ENCODE measurements at regions of chr2 and their contacts with region 1.

Region 1: GRCh38 chr2:11749646-11750349 is 3.4 kb downstream of the LPIN1 start:
- DNase-seq: no peak
- H3K27ac ChIP-seq: peak overlapping the region; percentile 56
- CTCF ChIP-seq: no peak

Region 2: DNA sequence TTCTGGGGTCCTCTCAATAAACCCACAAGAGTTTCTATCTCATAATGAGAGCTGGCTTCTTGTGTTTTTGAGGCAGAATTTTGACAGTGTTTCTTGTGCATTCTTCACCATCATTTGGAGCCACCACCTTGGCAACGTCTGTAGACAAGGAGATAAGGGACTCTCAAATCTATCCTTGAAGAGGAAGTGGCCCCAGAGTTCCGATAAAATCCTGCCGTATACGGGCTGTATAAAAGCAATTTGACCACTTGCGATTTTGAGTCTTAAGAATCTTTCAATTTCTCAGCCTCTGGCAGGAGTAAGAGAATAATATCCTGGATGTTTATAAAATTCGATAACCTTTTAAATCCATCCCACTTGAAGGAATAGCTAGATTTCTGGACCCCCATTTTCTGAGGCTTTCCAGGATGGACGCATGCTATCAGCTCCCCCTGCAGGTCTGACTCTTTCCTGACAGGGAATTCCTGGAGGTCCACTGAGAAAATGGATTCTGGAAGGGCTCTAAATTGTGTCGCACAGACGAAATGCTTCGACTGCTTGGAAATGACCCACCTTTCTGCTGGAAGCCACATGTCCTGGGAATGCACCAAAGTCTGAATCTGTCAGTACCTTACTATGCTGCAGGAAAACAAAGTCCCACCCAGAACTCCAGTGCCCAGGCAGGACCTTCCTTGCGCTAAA is 337.9 kb before region 1 on chr2:
- CTCF ChIA-PET with region 1: no interaction called
- POLR2A ChIA-PET with region 1: no interaction called
- DNase-seq: peak; percentile 43
- H3K27ac ChIP-seq: no peak overlapping the region
- CTCF ChIP-seq: peak; percentile 76

Region 3: GRCh38 chr2:11716689-11717321 is 33.0 kb before region 1 on chr2:
- CTCF ChIA-PET with region 1: no interaction called
- POLR2A ChIA-PET with region 1: no interaction called
- DNase-seq: no peak
- H3K27ac ChIP-seq: no peak overlapping the region
- CTCF ChIP-seq: no peak

Region 4: DNA sequence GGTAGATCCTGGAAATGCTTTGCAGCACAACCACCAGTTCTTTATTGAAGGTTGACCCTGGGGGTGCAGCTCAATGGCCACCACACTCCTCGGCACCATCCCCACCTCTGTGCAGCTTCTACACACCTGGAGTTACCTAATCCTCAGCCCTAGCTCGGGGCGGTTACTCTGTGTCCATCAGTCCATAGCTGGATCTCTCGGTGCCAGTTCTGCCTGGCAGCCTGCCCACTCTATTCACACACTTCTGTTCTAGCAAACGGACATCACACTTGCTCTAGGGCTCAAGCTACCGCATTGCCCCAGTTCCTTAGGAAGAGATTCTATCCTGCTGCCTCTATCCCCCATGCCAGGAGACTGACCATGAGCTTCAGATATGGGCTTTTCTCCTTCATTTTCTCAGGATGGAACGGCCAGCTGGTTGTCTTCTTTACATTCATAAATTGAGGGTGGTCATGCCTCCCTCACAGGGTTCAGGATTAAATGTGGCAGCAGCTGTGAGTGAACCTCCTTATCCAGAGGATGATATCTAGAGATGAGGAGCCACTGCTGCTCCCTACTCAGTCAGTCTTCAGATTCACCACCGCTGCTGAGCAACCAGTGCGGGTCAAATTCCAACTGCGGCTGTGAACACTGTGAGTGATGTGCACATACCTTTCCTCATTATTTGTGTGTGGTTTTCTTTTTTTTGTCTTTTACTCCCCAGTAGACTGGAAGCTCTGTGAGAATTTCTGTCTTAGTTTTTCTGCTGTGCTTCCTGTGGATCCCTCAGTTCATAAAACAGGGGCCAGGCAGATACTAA is 900.0 kb after region 1 on chr2:
- CTCF ChIA-PET with region 1: no interaction called
- POLR2A ChIA-PET with region 1: interaction called, 11 read pairs
- DNase-seq: no peak
- H3K27ac ChIP-seq: no peak overlapping the region
- CTCF ChIP-seq: no peak